ENCODE measurements at regions of chr3 and their contacts with region 1.

Region 1: DNA sequence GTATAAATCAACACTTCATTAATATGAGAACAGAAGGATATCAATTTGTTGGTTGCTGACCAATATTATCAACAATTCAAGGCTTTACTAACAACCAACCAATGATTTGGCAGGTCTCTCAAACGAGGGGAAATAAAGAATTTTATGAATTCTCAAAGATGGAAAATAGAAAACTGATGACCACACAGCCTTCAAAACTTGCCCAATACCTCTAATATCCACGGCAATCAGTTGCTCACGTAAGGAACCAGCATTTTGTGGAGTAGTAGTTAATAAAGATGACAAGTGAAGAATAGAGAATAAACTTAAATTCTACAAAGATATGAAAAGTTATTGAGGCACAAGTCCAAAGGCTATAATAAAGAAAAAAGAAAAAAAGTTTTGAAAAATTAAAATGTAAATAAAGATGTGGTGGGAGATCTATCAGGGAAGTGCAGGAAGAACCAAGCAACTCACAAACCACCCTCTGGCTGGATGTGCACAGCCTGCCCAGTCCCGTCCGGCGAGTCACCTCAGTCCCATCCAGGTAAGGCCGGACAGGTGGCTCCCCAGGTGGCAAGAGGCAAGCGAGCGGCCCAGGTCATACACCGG is 808 bp downstream of the GK5 start:
- DNase-seq: no peak
- H3K4me3 ChIP-seq: peak overlapping the region; percentile 87
- H3K27ac ChIP-seq: no peak overlapping the region
- H3K4me1 ChIP-seq: peaks cover 16% of the 10 kb centered on the region
- CTCF ChIP-seq: no peak

Region 2: DNA sequence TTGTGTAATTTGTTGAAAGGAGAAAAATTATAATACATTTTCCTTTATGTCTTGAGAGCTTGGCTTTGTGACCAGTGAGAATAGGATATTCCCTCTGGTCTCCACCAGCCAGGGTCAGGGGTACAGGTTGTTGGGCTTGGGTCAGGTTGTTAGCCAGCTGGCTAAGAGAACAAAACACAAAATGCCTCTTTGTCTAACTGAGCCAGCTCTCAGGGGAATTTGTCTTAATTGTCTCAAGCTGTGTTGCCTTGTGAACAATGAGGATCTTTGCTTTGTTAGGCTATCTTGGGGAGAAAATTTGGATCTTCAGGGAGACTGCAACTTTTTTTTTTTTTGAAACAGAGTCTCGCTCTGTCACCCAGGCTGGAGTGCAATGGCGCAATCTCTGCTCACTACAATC is 18.6 kb after region 1 on chr3:
- CTCF ChIA-PET with region 1: no interaction called
- POLR2A ChIA-PET with region 1: no interaction called
- intact Hi-C with region 1: no loop called
- DNase-seq: no peak
- H3K4me3 ChIP-seq: no peak overlapping the region
- H3K27ac ChIP-seq: no peak overlapping the region
- H3K4me1 ChIP-seq: no peaks in the 10 kb centered on the region
- CTCF ChIP-seq: no peak

Region 3: GRCh38 chr3:142447852-142448823 is 223.6 kb after region 1 on chr3 and contains the start of gene XRN1:
- CTCF ChIA-PET with region 1: no interaction called
- POLR2A ChIA-PET with region 1: no interaction called
- intact Hi-C with region 1: loop called (anchors 5 kb)
- DNase-seq: peak; percentile 93
- H3K4me3 ChIP-seq: peak within 1 kb of the TSS; percentile 87
- H3K27ac ChIP-seq: peak within 1 kb of the TSS; percentile 65
- H3K4me1 ChIP-seq: peaks cover 24% of the 10 kb centered on the region
- CTCF ChIP-seq: no peak
- total RNA-seq, gene XRN1: 33.1 and 43.6 TPM in 2 replicates